ENCODE measurements at regions of chr9 and their contacts with region 1.

Region 1: DNA sequence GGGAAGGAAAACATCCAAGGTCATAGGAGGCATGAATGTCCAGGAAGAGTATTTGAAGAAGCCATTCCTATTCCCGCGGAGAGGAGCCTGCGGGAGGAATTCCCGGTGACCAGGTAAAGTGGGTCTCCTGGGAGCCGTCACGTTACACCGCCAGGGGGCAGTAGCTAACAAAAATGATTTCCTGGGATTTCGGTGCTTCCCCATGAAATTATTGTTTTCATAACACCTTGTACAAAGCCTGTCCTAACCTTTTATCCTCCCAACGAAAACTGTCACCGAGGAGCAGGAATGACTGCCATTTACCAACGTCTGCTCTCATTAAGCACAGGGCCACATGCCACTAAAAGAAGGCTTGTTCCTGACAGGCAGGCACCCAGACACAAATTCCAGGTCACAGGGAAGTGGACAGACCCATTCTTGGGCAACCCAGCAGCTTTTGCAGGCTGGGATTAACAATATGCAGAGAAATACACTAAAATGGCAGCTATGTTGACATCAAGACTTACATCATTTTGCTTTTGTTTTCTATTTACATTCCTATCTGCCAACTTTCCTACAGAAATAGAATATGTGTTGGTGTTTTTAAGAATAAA is 41.2 kb upstream of the CTSL start:
- DNase-seq: peak; percentile 71

Region 2: DNA sequence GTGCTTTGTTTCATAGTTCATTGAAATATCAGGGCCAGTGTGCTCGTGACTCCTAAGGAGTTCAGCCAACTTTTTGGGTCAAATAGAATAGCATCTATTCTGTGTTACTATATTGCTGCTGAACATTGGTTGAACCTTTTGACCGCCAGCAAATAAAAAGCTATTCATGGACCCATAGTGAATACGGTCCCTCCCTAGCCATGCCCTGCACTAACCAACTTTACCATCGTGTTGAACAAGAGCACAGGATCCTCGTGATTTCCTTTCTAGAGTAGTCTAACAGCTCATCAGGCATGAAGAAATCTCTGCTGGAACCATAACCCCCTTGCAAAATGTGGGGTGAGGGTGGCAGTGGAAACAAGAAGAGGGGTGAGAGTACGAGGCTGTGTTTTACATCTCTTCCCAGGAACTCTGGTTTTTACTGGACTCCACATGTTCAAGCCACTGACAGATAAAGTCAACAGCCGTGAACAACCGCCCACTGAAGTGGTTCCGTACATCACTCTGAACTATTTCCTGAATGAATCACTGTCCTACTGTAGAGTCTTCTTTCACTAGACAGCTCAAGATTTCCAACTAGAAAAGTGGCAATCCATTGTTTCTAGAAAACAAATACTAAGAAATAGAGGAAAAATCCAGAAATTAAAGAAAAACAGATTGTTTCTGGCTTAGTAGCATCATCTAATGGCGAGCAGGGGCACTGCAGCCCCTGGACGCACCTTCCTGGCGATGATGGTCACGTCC is 127.8 kb after region 1 on chr9:
- CTCF ChIA-PET with region 1: interaction called, 13 read pairs
- POLR2A ChIA-PET with region 1: no interaction called
- DNase-seq: peak; percentile 52